ENCODE measurements at regions of chr13 and their contacts with region 1.

Region 1: DNA sequence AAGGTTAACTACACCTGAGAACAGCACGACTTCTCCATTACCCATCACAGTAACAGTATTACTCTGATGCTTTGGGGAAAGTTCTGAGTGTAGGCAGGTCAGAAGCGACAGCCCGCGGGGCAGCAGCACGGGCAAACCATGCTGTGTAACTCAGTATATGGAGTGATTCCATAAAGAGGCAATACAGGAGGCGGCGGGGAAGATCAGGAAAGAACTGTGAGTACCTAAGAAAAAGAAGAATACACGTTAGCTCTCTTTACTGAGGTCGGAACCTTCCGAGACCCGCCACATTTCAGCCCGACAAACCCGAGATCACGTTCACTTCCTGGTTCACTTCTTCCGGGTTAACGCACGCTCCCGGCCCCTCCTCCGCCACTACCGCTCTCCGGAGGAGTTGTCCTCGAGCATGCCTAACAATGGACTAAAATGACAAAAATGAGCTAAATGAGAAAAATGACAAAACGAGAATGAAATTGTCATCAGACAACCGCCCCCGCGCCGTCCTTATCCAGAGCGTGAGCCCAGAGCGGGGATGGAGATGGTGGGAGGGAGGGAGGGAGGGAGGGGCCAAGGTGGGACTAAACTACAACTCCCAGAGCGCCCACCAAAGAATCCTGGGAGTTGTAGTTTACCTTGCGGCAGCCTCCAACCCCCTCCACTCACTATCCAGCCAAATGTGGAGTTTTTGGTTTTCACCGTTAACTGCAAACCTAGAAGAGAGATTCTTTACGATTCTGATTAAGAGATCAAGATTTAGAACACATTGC is at the start of gene MTRF1:
- DNase-seq: peak; percentile 68 to 70
- ATAC-seq: peak; percentile 98 to 99
- H3K4me3 ChIP-seq: peak within 1 kb of the TSS; percentile 77 to 87 (median 82)
- H3K27ac ChIP-seq: peak within 1 kb of the TSS; percentile 83 to 91 (median 90)
- H3K4me1 ChIP-seq: peaks cover 8% of the 10 kb centered on the region in 2 donors
- H3K27me3 ChIP-seq: no peaks in the 10 kb centered on the region
- CTCF ChIP-seq: no peak
- POLR2A ChIP-seq: peak in 1 of 2 donors; percentile 42
- total RNA-seq, gene MTRF1: 8.2 to 16.7 (median 13.3) TPM

Region 2: DNA sequence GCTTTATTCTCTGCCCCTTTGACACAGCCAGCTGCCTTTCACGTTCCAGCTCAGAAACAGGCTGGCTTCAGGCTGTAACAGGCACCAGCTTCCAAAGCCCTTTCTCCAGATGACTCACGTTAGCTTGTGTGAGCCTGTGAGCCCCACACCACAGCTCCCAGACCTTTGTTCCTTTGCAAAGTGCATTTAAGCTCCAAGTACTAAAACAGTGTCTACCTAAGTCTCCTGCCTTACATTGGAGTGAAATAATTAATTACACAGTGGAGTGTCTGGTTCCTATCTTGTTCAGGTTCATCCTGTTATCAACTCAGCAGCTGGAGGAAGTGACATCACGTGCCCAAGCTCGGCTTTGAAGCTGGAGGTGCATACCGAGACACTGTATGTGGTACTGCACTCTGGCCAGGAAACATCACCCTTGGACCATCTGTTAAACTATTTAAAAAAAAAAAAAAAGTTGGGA is 1072.8 kb before region 1 on chr13:
- in situ Hi-C with region 1: no loop called
- intact Hi-C with region 1: no loop called
- DNase-seq: no peak
- ATAC-seq: peak; percentile 51 to 59
- H3K4me3 ChIP-seq: no peak overlapping the region
- H3K27ac ChIP-seq: peak overlapping the region; percentile 66 to 77 (median 72)
- H3K4me1 ChIP-seq: peaks cover 35 to 41% of the 10 kb centered on the region in 2 donors
- H3K27me3 ChIP-seq: no peaks in the 10 kb centered on the region
- CTCF ChIP-seq: no peak
- POLR2A ChIP-seq: no peak

Region 3: DNA sequence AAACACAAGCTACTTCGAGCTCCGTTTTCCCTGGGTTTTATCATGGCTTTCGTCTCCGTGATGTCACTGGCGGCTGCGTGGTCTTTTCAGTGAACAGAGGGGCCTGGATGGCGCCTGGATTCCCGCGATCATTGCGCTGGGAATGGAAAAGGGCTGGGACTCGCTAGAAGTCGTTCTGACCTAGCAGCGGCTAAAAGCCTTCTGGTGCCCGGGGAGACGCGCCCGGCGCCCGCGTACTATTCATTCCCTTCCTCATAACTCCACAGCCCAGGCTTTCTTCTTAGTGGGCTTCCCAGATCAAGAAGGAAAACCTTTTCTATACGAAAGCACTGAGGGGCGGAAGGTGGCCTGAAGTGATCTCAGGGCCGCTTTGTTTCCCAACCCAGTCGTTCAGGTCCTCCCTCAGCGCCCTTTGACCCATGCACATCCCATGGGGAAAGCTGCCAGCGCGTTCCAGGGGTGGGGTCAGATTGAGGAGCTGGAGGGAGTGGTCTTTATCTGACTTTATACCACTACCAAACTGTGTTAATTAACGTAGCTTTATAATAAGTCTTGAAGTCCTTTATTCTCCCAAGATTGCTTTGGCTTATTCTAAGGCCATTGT is 340.9 kb before region 1 on chr13:
- in situ Hi-C with region 1: no loop called
- intact Hi-C with region 1: no loop called
- DNase-seq: no peak
- ATAC-seq: no peak
- H3K4me3 ChIP-seq: no peak overlapping the region
- H3K27ac ChIP-seq: no peak overlapping the region
- H3K4me1 ChIP-seq: peaks cover 9 to 13% of the 10 kb centered on the region in 2 donors
- H3K27me3 ChIP-seq: no peaks in the 10 kb centered on the region
- CTCF ChIP-seq: no peak
- POLR2A ChIP-seq: no peak

Region 4: GRCh38 chr13:41193919-41194824 is 69.3 kb before region 1 on chr13 and contains the start of gene KBTBD7:
- in situ Hi-C with region 1: loop called in 1 of 4 experiments (anchors 10 kb)
- intact Hi-C with region 1: loop called (anchors 1 kb)
- DNase-seq: peak; percentile 90 to 93
- ATAC-seq: peak; percentile 96 to 97
- H3K4me3 ChIP-seq: peak within 1 kb of the TSS; percentile 82 to 90 (median 87)
- H3K27ac ChIP-seq: peak within 1 kb of the TSS; percentile 89 to 94 (median 92)
- H3K4me1 ChIP-seq: peaks cover 26 to 31% of the 10 kb centered on the region in 2 donors
- H3K27me3 ChIP-seq: no peaks in the 10 kb centered on the region
- CTCF ChIP-seq: peak in 1 of 5 experiments; percentile 29
- POLR2A ChIP-seq: peak; percentile 56 to 79
- total RNA-seq, gene KBTBD7: 2.3 to 5.6 (median 5.3) TPM

Measured in gastrocnemius medialis (tissue), 4 donors.